Activated CD4-positive, alpha-beta T cell treated with anti-CD3 and anti-CD28 coated beads, Interleukin-2, amount 10 ng/mL, durations not matched to agents 24 days and 14 days (primary cell): ENCODE measurements at regions of chr14 and their contacts with region 1.

Region 1: GRCh38 chr14:57390028-57390805 is at the start of gene NAA30:
- DNase-seq: peak; percentile 97
- H3K4me3 Mint-ChIP-seq: peak within 1 kb of the TSS; percentile 93
- H3K27ac Mint-ChIP-seq: peak within 1 kb of the TSS; percentile 93
- H3K4me1 Mint-ChIP-seq: peaks cover 39% of the 10 kb centered on the region
- H3K27me3 Mint-ChIP-seq: no peaks in the 10 kb centered on the region
- total RNA-seq, gene NAA30: 20.4 and 20.7 TPM in 2 replicates

Region 2: DNA sequence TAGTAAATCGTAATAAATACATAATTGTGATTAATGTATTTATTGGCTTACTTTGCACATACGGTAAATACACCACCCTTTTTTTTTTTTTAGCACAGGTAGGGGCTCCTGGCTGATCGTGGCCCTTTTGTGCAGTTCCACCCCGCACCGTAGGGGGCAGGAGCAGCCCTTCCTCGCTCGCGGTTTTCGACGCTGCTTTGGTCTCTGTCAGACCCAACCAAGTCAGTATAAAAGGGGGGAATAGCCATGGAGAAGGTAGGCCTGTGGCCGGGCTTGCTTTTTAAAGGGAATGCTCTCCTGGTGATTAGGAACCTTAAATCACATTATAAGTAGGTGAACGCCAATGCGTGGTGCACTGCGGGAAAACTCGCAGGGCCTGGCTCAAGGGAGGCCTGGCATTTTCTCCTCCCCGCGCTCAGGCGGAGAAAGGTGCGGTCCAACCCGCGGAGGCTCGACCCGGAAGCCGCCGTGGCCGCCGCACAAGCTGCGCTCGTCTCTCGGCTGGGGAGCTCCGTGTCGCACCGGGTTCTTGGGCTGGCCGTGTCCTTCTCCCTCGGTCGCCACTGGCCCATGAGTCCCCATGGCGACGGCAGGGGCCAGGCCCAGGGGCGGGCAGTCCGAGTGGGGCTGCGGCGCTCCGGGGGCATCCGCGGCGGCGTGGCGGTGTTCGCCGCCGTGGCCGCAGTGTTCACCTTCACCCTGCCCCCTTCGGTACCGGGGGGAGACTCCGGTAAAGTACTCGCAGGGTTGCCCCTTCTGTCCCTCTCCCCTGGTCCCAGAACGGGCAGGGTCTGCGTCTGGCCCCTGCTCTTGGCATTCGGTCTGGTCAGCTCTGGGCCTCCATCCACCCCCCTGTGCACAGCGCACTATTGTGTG is 810.6 kb before region 1 on chr14 and contains the start of gene TMEM260:
- intact Hi-C with region 1: loop called (anchors 2 kb)
- DNase-seq: peak; percentile 97
- H3K4me3 Mint-ChIP-seq: peak within 1 kb of the TSS; percentile 94
- H3K27ac Mint-ChIP-seq: peak within 1 kb of the TSS; percentile 95
- H3K4me1 Mint-ChIP-seq: peaks cover 25% of the 10 kb centered on the region
- H3K27me3 Mint-ChIP-seq: no peaks in the 10 kb centered on the region
- total RNA-seq, gene TMEM260: 12.0 and 14.7 TPM in 2 replicates

Region 3: GRCh38 chr14:57060276-57060955 is 329.8 kb before region 1 on chr14:
- intact Hi-C with region 1: loop called (anchors 5 kb)
- DNase-seq: peak; percentile 76
- H3K4me3 Mint-ChIP-seq: peak overlapping the region; percentile 16
- H3K27ac Mint-ChIP-seq: peak overlapping the region; percentile 83
- H3K4me1 Mint-ChIP-seq: peaks cover 17% of the 10 kb centered on the region
- H3K27me3 Mint-ChIP-seq: peaks cover 13% of the 10 kb centered on the region

Region 4: GRCh38 chr14:57268161-57269069 is 121.8 kb before region 1 on chr14 and contains the starts of genes AP5M1 and EXOC5:
- intact Hi-C with region 1: loop called (anchors 1 kb)
- DNase-seq: peak; percentile 98
- H3K4me3 Mint-ChIP-seq: peak within 1 kb of the TSS; percentile 96
- H3K27ac Mint-ChIP-seq: peak within 1 kb of the TSS; percentile 100
- H3K4me1 Mint-ChIP-seq: peaks cover 46% of the 10 kb centered on the region
- H3K27me3 Mint-ChIP-seq: no peaks in the 10 kb centered on the region
- total RNA-seq, gene AP5M1: 41.6 and 47.5 TPM in 2 replicates
- total RNA-seq, gene EXOC5: 76.8 and 80.5 TPM in 2 replicates

Region 5: DNA sequence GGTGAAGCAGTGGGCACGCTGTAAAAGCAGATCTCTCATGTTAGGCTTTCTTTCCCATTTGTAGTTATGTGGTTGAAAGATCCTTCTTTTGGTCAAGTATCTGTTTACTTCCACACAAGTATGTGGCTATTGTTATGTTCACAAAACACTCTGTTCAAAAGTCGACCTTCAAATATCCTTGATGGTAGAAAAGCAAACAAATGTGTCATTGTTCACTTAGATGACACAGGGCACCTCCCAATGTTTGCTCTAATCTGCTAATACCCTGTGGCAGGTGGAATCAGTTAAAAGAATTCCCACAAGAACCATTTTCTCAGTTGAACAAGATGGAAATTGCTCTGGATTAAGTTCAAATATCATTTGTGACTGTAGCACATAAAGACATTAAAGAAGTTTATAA is 43.5 kb before region 1 on chr14:
- intact Hi-C with region 1: no loop called
- DNase-seq: no peak
- H3K4me3 Mint-ChIP-seq: no peak overlapping the region
- H3K27ac Mint-ChIP-seq: no peak overlapping the region
- H3K4me1 Mint-ChIP-seq: no peaks in the 10 kb centered on the region
- H3K27me3 Mint-ChIP-seq: peaks cover 5% of the 10 kb centered on the region

Region 6: DNA sequence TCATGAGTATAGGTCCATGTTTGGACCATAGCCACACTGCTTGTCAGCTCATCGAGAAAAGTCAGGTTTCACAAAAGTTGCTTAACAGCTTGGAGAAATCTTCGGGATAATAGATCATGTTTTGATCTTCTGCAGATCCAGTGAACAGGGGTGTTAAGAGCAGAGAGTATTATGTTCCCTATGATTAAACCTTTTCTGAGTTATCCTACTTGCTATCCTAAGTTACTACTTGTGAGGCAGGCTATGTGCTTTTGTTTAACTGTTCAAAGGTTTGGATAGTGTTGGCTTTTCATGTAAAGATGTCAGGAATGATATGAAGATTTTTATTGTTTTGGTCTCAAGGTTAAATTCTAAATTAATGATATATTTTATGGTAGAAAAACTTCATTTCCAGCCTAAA is 11.3 kb after region 1 on chr14:
- intact Hi-C with region 1: loop called (anchors 1 kb)
- DNase-seq: no peak
- H3K4me3 Mint-ChIP-seq: no peak overlapping the region
- H3K27ac Mint-ChIP-seq: no peak overlapping the region
- H3K4me1 Mint-ChIP-seq: peaks cover 7% of the 10 kb centered on the region
- H3K27me3 Mint-ChIP-seq: no peaks in the 10 kb centered on the region